ENCODE measurements at regions of chr19 and their contacts with region 1.

Region 1: DNA sequence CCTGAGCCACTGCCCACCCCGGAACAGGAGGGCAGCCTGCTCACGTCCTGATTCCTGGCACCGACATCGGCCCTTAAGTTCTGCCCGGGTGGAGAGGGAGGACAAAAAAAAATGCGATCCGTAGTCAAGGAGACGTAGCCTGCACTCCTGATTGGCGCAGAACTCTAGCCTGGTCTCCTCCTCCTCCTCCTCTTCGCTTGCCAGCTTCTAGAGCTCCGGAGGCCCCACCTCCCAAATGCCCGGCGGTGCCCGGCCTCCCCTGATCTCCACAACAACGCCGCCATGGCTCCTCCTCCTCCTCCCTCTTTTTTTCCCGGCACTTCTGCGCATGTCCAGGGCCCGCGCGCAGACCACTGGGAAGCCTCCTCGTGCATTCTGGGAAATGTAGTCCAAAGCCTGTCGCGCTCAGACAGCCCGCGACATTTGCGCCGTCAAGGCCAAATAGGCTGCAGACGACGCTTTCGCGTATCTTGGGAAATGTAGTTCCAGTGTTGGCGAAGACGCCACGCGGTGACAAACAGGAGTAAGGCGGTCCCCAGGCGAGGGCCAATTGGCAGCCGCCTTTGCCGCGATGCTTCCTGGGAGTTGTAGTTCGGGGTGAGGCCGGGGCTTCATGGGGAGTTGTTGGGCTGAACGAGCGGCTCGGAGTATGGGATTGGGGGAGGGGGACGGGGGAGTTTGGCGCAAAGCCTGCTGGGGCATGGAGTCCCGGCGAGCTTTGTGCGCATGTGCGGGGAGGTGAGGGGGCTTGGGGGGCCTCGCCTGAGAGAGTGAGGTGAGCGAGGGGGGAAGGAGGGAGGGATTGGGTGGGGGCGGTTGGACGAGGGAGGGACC is at the start of gene ZNF444:
- H3K4me3 Mint-ChIP-seq: peak within 1 kb of the TSS; percentile 73
- H3K27ac Mint-ChIP-seq: peak within 1 kb of the TSS; percentile 91
- H3K4me1 Mint-ChIP-seq: peaks cover 49% of the 10 kb centered on the region
- H3K27me3 Mint-ChIP-seq: no peaks in the 10 kb centered on the region

Region 2: DNA sequence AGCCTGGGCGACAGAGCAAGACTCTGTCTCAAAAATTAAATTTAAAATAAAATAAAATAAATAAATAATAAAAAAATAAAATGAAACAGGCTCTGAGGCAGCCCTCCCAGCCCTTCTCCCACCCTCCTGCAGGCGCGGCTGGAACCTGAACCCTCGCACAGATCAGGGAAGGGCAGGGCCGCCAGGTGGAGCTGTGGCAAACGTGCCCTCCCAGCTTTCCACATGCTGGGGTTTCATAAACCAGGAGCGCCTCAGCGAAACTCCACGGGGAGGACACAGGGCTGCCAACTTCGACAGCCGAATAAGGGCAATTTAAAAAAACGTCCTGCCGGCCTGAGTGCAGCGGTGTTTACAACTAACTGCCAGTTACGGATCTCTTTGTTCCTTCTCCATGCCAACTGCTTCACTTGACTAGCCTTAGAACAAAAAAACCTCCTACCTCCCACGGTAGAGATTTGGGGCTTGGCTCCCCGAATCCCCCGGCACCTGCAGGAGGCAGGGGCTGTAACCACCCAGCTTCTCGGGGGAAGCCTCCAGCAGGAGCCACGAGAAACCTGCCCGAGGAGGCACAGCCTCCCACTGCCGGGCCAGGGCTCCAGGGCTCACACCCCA is 35.6 kb before region 1 on chr19:
- intact Hi-C with region 1: loop called (anchors 1 kb)
- H3K4me3 Mint-ChIP-seq: peak overlapping the region; percentile 46
- H3K27ac Mint-ChIP-seq: peak overlapping the region; percentile 70
- H3K4me1 Mint-ChIP-seq: peaks cover 77% of the 10 kb centered on the region
- H3K27me3 Mint-ChIP-seq: no peaks in the 10 kb centered on the region

Region 3: DNA sequence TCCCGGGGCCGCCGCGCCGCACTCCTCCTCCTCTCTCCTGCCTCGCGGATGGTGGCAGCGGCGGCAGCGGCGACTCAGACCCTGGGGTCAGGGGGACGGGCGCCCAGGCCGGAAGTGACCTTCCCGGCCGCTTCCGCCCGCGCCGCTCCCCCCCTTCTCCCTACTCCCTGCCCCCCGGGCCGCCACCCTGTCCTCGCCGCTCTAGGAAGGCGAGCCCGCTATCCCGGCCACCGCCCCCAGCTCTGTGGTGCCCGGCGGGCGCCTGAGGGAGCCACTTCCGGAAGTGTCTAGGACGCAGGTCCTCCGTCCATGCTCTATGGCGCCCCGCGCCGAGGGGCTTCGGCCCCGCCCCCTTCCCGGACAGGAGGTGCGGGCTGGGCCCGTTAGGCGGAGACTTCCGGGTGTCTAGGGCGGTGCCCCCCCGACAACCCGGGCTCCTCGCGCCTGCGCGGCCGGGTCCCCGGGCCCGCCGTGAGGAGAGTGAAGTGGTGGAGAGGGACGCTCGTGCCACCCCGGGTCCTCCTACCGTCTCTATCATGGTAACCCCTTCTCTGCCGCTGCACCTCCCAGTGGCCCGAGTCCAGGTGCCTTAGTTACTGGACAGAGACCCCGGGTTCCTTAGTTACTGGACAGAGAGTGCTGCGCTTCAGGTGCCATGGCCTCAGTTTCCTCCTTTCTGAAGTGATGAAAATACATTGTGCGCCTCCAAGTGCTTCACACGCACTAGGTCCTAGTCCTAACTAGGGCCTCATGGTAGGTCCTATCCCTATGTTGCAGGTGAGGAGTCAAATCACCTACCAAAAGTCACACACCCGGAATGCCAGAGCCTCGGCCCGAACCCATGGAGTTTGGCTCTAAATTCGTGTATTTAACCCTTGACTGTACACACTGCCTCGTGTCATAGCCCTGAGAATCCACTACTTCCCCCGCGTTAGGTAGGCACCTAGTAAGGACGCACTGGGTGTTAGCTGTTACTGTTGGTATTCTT is 19.3 kb before region 1 on chr19 and contains the start of gene ZNF787:
- intact Hi-C with region 1: loop called (anchors 1 kb)
- H3K4me3 Mint-ChIP-seq: peak within 1 kb of the TSS; percentile 95
- H3K27ac Mint-ChIP-seq: peak within 1 kb of the TSS; percentile 98
- H3K4me1 Mint-ChIP-seq: peaks cover 36% of the 10 kb centered on the region
- H3K27me3 Mint-ChIP-seq: no peaks in the 10 kb centered on the region

Region 4: DNA sequence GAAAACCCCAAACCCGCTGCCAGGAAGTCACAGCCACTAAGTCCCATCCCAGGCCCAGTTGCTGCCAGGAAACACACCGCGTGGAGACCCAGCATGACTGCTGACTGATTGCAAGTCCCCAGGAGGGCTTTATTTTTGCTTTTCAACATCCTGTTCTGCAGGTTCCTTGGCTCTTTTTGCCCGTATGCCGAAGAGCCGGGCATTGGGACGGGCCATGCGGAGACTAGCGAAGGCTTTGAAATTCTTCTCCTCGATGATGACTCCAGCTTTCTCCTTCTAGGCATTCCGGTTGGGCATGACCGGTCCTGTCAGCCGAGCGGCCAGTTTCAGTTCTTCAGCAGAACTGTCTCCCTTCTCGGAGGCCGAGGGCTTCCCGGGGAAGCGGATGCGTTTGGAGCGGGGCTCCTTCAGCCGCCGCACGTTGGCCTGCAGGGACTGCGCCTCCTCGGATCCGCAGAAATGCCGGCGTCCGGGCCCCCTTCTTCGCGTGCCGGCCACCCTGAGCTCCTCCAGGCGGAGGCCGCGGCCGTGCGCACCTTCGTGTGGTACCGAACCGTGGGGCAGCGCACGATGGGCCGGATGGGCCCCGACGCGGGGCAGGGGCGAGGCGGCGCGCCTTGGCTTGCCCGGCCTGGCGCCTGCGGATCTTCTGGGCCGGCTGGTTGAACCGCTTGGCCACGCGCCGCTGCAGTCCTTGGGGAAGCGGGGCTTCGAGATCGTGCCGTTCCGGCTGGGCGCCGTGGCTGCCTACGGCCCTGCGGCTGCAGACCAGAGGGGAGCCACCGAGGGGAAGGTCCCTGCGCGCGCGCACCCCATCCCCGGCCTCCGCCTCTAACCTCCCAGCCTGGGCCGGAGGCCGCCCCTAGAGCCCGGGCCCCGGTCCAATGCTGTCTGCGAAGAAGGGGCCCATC is 76.5 kb after region 1 on chr19:
- intact Hi-C with region 1: no loop called
- H3K4me3 Mint-ChIP-seq: peak overlapping the region; percentile 40
- H3K27ac Mint-ChIP-seq: no peak overlapping the region
- H3K4me1 Mint-ChIP-seq: peaks cover 11% of the 10 kb centered on the region
- H3K27me3 Mint-ChIP-seq: peaks cover 32% of the 10 kb centered on the region

Measured in dendritic cell treated with granulocyte-macrophage colony-stimulating factor and Interleukin-4, amounts not matched to agents 40 ng/mL and 50 ng/mL, for 4 days (primary cell).